Gastrocnemius medialis (tissue), 4 donors: ENCODE measurements at regions of chr9 and their contacts with region 1.

Region 1: DNA sequence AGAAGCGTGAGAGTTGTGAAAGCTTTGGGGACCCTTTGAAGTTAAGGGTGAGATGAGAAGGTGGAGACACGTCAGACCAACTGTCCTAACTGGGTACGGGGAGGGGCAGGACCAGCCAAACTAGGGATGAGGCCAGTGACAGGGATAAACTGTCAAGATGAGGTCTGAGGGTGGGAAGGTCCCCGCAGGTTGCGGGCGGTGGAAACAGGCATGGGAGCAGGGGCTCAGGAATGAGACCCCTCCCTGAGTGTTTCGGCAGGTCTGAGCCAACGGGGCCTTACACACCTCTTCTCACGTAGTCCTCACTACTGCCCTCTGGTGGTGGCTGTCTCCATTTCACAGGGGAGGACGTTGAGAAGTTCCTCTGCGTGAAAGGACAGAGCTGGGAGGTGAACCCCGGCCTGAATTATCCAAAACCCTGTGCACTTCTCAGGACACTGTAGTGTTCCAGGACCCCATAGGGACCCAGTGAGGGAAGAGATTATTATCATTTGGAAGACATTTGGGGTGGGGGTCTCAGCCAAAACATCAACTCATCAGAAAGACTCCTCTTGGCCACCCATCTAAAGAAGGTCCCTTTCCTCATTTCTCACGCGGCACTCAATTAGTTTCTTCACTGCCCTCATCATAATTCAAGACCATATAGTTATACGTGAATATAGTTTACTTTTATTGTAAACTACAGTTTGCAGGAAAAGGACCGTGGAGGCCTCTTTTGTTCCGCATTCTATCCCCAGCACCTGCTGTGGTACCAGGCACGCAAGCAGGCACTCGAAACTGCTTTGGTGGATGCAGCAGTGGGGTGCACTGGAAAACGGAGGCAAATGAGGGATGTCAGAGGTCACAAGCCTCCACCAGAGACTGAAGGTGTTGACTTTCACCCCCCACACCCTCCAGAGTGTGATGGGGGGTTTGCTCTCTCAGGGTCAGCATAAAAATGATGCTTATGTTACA is 21.7 kb upstream of the NANS start:
- DNase-seq: peak; percentile 69 to 82
- ATAC-seq: peak; percentile 45 to 61
- H3K4me3 ChIP-seq: peak overlapping the region in 1 of 4 donors; percentile 26
- H3K27ac ChIP-seq: peak overlapping the region; percentile 75 to 80 (median 80)
- H3K4me1 ChIP-seq: peaks cover 36 to 39% of the 10 kb centered on the region in 2 donors
- H3K27me3 ChIP-seq: no peaks in the 10 kb centered on the region
- CTCF ChIP-seq: peak; percentile 78 to 83 (median 81)
- POLR2A ChIP-seq: no peak

Region 2: DNA sequence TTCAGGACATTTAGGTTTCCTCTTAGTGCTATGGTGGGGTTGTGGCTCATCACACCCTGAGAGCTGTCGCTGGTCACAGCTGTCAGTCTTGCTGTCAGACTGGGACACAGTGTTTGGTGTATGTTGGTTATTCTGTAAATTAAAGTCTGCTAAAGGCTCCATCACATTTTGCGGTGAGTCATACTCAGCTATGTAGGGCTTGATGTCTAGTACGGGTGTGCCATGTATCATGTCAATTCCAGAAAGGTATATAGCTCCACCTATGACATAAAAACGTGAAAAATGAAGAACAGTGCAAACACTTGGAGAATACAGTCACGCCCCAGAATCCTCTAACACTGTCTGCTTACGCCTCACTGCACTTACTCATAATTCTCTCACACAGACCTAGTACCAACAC is 124.5 kb before region 1 on chr9:
- in situ Hi-C with region 1: loop called in 2 of 4 experiments (anchors 10 to 25 kb)
- intact Hi-C with region 1: no loop called
- DNase-seq: no peak
- ATAC-seq: no peak
- H3K4me3 ChIP-seq: no peak overlapping the region
- H3K27ac ChIP-seq: no peak overlapping the region
- H3K4me1 ChIP-seq: peaks cover 0 to under 1% of the 10 kb centered on the region in 2 donors
- H3K27me3 ChIP-seq: no peaks in the 10 kb centered on the region
- CTCF ChIP-seq: no peak
- POLR2A ChIP-seq: no peak

Region 3: GRCh38 chr9:97982683-97983588 is 51.9 kb before region 1 on chr9 and contains the start of gene ANP32B:
- in situ Hi-C with region 1: loop called in 3 of 4 experiments (anchors 10 kb)
- intact Hi-C with region 1: loop called (anchors 1 kb)
- DNase-seq: peak; percentile 73 to 85
- ATAC-seq: peak; percentile 55 to 59
- H3K4me3 ChIP-seq: peak within 1 kb of the TSS; percentile 84 to 99 (median 89)
- H3K27ac ChIP-seq: peak within 1 kb of the TSS; percentile 93 to 99 (median 96)
- H3K4me1 ChIP-seq: peaks cover 48 to 55% of the 10 kb centered on the region in 2 donors
- H3K27me3 ChIP-seq: no peaks in the 10 kb centered on the region
- CTCF ChIP-seq: peak; percentile 73 to 99 (median 97)
- POLR2A ChIP-seq: peak; percentile 58 to 63
- total RNA-seq, gene ANP32B: 8.2 to 24.5 (median 17.8) TPM

Region 4: GRCh38 chr9:98132806-98133631 is 98.1 kb after region 1 on chr9:
- in situ Hi-C with region 1: no loop called
- intact Hi-C with region 1: no loop called
- DNase-seq: no peak
- ATAC-seq: no peak
- H3K4me3 ChIP-seq: no peak overlapping the region
- H3K27ac ChIP-seq: no peak overlapping the region
- H3K4me1 ChIP-seq: no peaks in the 10 kb centered on the region
- H3K27me3 ChIP-seq: no peaks in the 10 kb centered on the region
- CTCF ChIP-seq: no peak
- POLR2A ChIP-seq: no peak